PC-3 (cell line): ENCODE measurements at regions of chr13 and their contacts with region 1.

Region 1: GRCh38 chr13:32586080-32586900 is at the start of gene PDS5B:
- DNase-seq: peak; percentile 92
- ATAC-seq: peak; percentile 84
- H3K4me3 ChIP-seq: peak within 1 kb of the TSS; percentile 96
- H3K27ac ChIP-seq: peak within 1 kb of the TSS; percentile 63
- H3K4me1 ChIP-seq: peaks cover 23% of the 10 kb centered on the region
- H3K27me3 ChIP-seq: no peaks in the 10 kb centered on the region
- CTCF ChIP-seq: peak; percentile 74
- total RNA-seq, gene PDS5B: 19.5 and 20.3 TPM in 2 replicates

Region 2: GRCh38 chr13:32409561-32410421 is 176.5 kb before region 1 on chr13:
- CTCF ChIA-PET with region 1: no interaction called
- POLR2A ChIA-PET with region 1: no interaction called
- intact Hi-C with region 1: no loop called
- DNase-seq: no peak
- ATAC-seq: no peak
- H3K4me3 ChIP-seq: no peak overlapping the region
- H3K27ac ChIP-seq: no peak overlapping the region
- H3K4me1 ChIP-seq: no peaks in the 10 kb centered on the region
- H3K27me3 ChIP-seq: no peaks in the 10 kb centered on the region
- CTCF ChIP-seq: no peak

Region 3: GRCh38 chr13:32695602-32696250 is 109.4 kb after region 1 on chr13:
- CTCF ChIA-PET with region 1: no interaction called
- POLR2A ChIA-PET with region 1: interaction called, 10 read pairs
- intact Hi-C with region 1: no loop called
- DNase-seq: no peak
- ATAC-seq: no peak
- H3K4me3 ChIP-seq: no peak overlapping the region
- H3K27ac ChIP-seq: no peak overlapping the region
- H3K4me1 ChIP-seq: no peaks in the 10 kb centered on the region
- H3K27me3 ChIP-seq: no peaks in the 10 kb centered on the region
- CTCF ChIP-seq: no peak